ENCODE measurements at regions of chr15 and their contacts with region 1.

Region 1: GRCh38 chr15:35690698-35691116 is 144.7 kb upstream of the DPH6 start:
- DNase-seq: no peak
- ATAC-seq: no peak
- H3K4me3 ChIP-seq: no peak overlapping the region
- H3K27ac ChIP-seq: no peak overlapping the region
- H3K4me1 ChIP-seq: peaks cover 6% of the 10 kb centered on the region
- H3K27me3 ChIP-seq: no peaks in the 10 kb centered on the region; a peak in 2 of 5 replicates
- CTCF ChIP-seq: no peak
- EP300 ChIP-seq: no peak
- POLR2A ChIP-seq: no peak
- RAD21 ChIP-seq: no peak

Region 2: DNA sequence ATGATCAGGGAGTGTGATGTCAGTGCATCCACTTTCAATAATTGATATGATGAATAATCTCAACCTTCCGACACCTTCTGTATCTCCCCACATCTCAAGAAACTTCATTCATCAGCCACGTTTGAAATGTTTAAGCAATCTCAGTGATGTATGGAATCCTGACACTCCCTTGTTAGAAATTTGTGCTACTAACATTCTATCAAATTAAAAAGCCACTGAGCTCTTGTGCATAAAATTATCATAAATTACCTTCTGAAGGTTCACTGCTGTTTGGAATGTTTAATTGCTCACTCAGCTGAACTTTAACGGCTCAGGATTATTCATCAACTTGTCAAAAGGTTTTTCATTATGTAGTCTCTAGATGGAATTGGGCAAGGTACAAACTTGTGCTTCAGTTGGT is 36.4 kb before region 1 on chr15:
- CTCF ChIA-PET with region 1: no interaction called
- POLR2A ChIA-PET with region 1: no interaction called
- in situ Hi-C with region 1: no loop called
- intact Hi-C with region 1: loop called (anchors 1 kb)
- DNase-seq: no peak
- ATAC-seq: no peak
- H3K4me3 ChIP-seq: no peak overlapping the region
- H3K27ac ChIP-seq: no peak overlapping the region
- H3K4me1 ChIP-seq: no peaks in the 10 kb centered on the region
- H3K27me3 ChIP-seq: no peaks in the 10 kb centered on the region
- CTCF ChIP-seq: no peak
- EP300 ChIP-seq: no peak
- POLR2A ChIP-seq: no peak
- RAD21 ChIP-seq: no peak